ENCODE measurements at regions of chr1 and their contacts with region 1.

Region 1: GRCh38 chr1:148435406-148435805 is 47.7 kb downstream of the PPIAL4G start:
- DNase-seq: no peak
- ATAC-seq: no peak
- H3K4me3 ChIP-seq: no peak overlapping the region
- H3K27ac ChIP-seq: no peak overlapping the region
- H3K4me1 ChIP-seq: peaks cover 0 to 4% of the 10 kb centered on the region in 2 experiments; a peak in 1 of 5 replicates
- H3K27me3 ChIP-seq: peaks cover 2 to 10% of the 10 kb centered on the region in 2 experiments; a peak in 2 of 5 replicates
- CTCF ChIP-seq: no peak
- EP300 ChIP-seq: no peak
- POLR2A ChIP-seq: no peak
- RAD21 ChIP-seq: no peak

Region 2: DNA sequence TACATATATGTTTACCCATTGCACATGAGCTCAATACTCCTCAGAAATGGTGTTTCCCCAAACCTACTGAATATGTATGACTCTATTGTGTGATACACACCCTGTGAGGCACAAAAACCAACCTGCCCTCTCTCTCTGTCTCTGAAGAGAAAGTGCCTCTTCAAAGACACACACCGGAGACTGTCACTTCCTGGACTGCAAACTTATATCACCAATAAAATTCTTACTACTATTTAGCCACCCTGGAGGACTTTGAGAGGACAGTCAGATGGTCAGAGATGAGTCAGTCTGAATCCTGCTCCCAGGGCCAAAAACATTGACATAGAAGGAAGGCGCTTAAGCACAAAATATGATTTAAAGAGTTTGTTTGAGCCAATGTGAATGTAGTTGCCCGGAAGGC is 62.7 kb before region 1 on chr1:
- CTCF ChIA-PET with region 1: no interaction called
- POLR2A ChIA-PET with region 1: no interaction called
- in situ Hi-C with region 1: no loop called
- intact Hi-C with region 1: loop called (anchors 10 kb)
- DNase-seq: no peak
- ATAC-seq: no peak
- H3K4me3 ChIP-seq: no peak overlapping the region
- H3K27ac ChIP-seq: no peak overlapping the region
- H3K4me1 ChIP-seq: no peaks in the 10 kb centered on the region; a peak in 1 of 5 replicates
- H3K27me3 ChIP-seq: no peaks in the 10 kb centered on the region; a peak in 2 of 5 replicates
- CTCF ChIP-seq: no peak
- EP300 ChIP-seq: no peak
- POLR2A ChIP-seq: no peak
- RAD21 ChIP-seq: no peak